Activated naive CD4-positive, alpha-beta T cell treated with anti-CD3 and anti-CD28 coated beads for 36 hours (primary cell): ENCODE measurements at regions of chr3 and their contacts with region 1.

Region 1: DNA sequence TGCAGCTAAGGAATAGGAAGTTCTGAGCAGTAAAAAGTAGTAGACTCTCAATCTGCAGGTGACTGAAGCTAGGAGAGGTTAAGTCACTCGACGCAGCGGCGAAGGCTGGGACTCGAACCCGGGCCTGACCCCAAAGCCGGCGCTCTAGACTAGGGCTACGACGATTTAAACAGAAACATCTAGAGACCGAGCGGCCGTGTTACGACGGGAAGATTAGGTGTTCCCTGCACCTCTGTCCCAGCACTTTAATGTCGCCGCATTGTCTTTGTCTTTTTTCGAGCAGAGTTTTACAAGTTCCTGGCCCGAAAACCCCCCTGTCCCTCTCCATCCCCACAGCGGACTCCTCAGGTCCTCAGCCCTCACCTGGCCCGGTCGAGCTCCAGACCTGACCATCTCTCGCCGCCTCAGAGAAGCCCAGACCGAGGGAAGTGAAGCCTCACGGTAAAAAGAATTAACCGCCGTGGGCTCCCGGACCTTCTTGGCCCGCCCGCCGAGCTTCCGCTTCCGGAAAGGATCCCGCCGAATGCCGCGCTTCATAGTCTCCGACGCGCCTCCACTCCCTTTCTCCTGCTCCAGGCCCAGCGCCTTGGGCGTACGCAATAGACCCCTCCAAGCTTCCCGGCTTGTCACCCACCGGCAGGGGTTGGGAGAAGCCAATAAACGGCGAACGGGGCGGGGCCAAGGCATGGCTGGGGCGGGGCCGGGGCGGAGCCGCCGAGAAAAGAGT is at the start of gene CCDC14:
- DNase-seq: peak; percentile 86
- H3K4me3 Mint-ChIP-seq: peak within 1 kb of the TSS; percentile 96
- H3K27ac Mint-ChIP-seq: peak within 1 kb of the TSS; percentile 88
- H3K4me1 Mint-ChIP-seq: peaks cover 19% of the 10 kb centered on the region
- H3K27me3 Mint-ChIP-seq: peaks cover 2% of the 10 kb centered on the region
- total RNA-seq, gene CCDC14: 44.8 to 48.4 TPM

Region 2: DNA sequence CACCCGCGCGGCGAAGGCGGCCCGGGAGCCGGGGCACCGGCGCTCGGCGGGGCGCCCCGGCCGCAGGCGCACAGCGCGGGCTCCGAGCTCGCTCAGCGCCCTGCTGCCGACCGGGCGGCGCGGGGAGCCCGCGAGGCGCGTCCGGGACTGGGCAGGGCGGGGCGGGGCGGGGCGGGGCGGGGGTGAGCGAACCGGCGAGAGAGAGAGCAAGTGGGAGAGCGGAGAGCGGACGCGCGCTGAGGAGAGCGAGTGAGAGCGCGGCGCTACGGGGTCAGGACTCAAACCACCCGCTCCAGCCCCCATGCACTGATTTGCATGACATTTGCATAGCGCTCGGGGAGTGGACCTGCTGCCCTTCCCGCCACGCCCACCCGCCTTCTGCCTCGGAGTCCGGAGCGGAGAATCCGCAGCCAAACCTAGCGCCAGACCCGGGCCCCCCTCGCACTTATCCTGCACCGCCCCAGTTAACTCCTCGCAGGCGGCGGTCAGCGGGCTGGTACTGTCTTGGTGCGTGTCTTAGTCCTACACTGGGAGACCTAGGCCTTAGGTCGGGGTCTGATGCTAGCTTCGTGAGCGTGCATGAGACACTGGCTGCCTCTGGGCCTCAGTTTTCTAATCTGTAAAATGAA is 76.6 kb before region 1 on chr3 and contains the start of gene MYLK:
- CTCF ChIA-PET with region 1: no interaction called
- intact Hi-C with region 1: loop called (anchors 1 kb)
- DNase-seq: peak; percentile 53
- H3K4me3 Mint-ChIP-seq: peak within 1 kb of the TSS; percentile 67
- H3K27ac Mint-ChIP-seq: no peak within 1 kb of the TSS
- H3K4me1 Mint-ChIP-seq: peaks cover 11% of the 10 kb centered on the region
- H3K27me3 Mint-ChIP-seq: peaks cover 57% of the 10 kb centered on the region
- total RNA-seq, gene MYLK: not detected

Region 3: GRCh38 chr3:124032648-124033359 is 71.9 kb after region 1 on chr3:
- CTCF ChIA-PET with region 1: no interaction called
- intact Hi-C with region 1: loop called (anchors 5 kb)
- DNase-seq: peak; percentile 79
- H3K4me3 Mint-ChIP-seq: peak overlapping the region; percentile 68
- H3K27ac Mint-ChIP-seq: no peak overlapping the region
- H3K4me1 Mint-ChIP-seq: peaks cover 11% of the 10 kb centered on the region
- H3K27me3 Mint-ChIP-seq: peaks cover 48% of the 10 kb centered on the region

Region 4: DNA sequence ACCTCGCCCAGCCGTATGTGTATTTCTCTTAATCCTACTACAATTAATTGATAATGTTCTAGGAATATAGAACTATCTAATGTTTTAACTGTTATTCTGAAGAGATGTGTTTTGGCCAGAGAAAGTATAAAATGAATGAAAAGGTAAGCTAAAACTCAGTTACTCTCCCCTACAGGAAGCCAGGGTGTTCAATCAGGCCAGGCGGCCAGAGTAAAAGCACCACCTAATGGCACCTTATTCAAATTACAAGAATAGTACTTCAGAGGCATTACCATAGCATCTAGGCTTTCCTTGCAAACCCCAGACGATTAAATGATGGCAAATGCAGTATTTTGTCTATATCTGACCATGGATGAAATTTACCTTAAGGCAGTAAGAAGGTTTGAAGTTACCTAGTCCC is 1241.3 kb after region 1 on chr3:
- CTCF ChIA-PET with region 1: no interaction called
- intact Hi-C with region 1: no loop called
- DNase-seq: peak; percentile 42
- H3K4me3 Mint-ChIP-seq: no peak overlapping the region
- H3K27ac Mint-ChIP-seq: no peak overlapping the region
- H3K4me1 Mint-ChIP-seq: no peaks in the 10 kb centered on the region
- H3K27me3 Mint-ChIP-seq: peaks cover 3% of the 10 kb centered on the region